MCF 10A (cell line): ENCODE measurements at regions of chr15 and their contacts with region 1.

Region 1: DNA sequence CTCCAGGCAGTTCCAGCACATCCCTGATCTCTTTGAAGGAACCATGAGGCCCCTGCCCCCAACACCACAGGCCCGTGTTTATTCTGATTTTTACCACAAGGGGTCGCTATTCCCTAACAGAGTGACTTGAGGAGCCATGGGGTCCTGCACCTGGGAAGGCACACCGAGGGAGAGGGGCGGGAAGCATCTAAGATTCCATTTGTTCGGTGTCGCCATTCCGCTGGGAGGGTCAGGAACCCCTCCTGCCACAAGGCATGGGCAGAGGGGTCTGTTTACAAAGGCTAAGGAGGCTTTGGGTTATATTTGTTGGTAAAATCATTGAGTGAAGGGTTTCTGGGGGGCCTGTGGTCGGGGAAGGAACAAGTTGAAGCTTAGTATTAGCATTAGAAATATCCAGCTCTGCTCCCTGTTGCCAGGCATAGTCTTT is 77.1 kb downstream of the WDR76 start:
- DNase-seq: peak; percentile 77
- H3K4me3 Mint-ChIP-seq: peak overlapping the region; percentile 4
- H3K27ac Mint-ChIP-seq: no peak overlapping the region
- H3K4me1 Mint-ChIP-seq: peaks cover 5% of the 10 kb centered on the region
- H3K27me3 Mint-ChIP-seq: no peaks in the 10 kb centered on the region
- CTCF ChIP-seq: peak; percentile 88

Region 2: GRCh38 chr15:43886558-43886957 is 17.3 kb before region 1 on chr15:
- CTCF ChIA-PET with region 1: interaction called, 13 read pairs
- POLR2A ChIA-PET with region 1: no interaction called
- intact Hi-C with region 1: no loop called
- DNase-seq: no peak
- H3K4me3 Mint-ChIP-seq: no peak overlapping the region
- H3K27ac Mint-ChIP-seq: no peak overlapping the region
- H3K4me1 Mint-ChIP-seq: no peaks in the 10 kb centered on the region
- H3K27me3 Mint-ChIP-seq: no peaks in the 10 kb centered on the region
- CTCF ChIP-seq: no peak

Region 3: GRCh38 chr15:43932907-43933306 is 29.0 kb after region 1 on chr15:
- CTCF ChIA-PET with region 1: interaction called, 30 read pairs
- POLR2A ChIA-PET with region 1: no interaction called
- intact Hi-C with region 1: loop called (anchors 5 kb)
- DNase-seq: no peak
- H3K4me3 Mint-ChIP-seq: no peak overlapping the region
- H3K27ac Mint-ChIP-seq: no peak overlapping the region
- H3K4me1 Mint-ChIP-seq: no peaks in the 10 kb centered on the region
- H3K27me3 Mint-ChIP-seq: no peaks in the 10 kb centered on the region
- CTCF ChIP-seq: no peak

Region 4: DNA sequence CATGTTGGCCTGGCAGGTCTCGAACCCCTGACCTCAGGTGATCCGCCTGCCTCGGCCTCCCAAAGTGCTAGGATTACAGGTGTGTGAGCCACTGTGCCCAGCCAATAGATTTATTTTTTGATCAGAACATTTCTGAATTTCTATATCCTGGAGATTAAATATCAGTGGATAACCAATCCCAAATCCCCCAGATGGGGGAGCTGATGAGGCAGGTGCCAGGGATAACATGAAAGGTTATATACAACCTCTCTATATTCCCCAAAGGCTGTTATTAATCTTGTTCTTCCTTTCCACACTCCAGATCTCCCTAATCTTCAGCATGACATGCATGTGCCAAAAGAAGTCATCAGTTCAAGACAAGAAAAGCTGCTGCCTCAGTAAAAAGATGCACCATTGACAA is 35.2 kb after region 1 on chr15:
- CTCF ChIA-PET with region 1: interaction called, 18 read pairs
- POLR2A ChIA-PET with region 1: no interaction called
- intact Hi-C with region 1: loop called (anchors 5 kb)
- DNase-seq: peak; percentile 47
- H3K4me3 Mint-ChIP-seq: no peak overlapping the region
- H3K27ac Mint-ChIP-seq: no peak overlapping the region
- H3K4me1 Mint-ChIP-seq: no peaks in the 10 kb centered on the region
- H3K27me3 Mint-ChIP-seq: no peaks in the 10 kb centered on the region
- CTCF ChIP-seq: peak; percentile 68

Region 5: GRCh38 chr15:44066316-44066740 is 162.5 kb after region 1 on chr15:
- CTCF ChIA-PET with region 1: interaction called, 82 read pairs
- POLR2A ChIA-PET with region 1: interaction called, 6 read pairs
- intact Hi-C with region 1: loop called (anchors 1 kb)
- DNase-seq: peak; percentile 93
- H3K4me3 Mint-ChIP-seq: no peak overlapping the region
- H3K27ac Mint-ChIP-seq: no peak overlapping the region
- H3K4me1 Mint-ChIP-seq: peaks cover 6% of the 10 kb centered on the region
- H3K27me3 Mint-ChIP-seq: no peaks in the 10 kb centered on the region
- CTCF ChIP-seq: peak; percentile 65

Region 6: DNA sequence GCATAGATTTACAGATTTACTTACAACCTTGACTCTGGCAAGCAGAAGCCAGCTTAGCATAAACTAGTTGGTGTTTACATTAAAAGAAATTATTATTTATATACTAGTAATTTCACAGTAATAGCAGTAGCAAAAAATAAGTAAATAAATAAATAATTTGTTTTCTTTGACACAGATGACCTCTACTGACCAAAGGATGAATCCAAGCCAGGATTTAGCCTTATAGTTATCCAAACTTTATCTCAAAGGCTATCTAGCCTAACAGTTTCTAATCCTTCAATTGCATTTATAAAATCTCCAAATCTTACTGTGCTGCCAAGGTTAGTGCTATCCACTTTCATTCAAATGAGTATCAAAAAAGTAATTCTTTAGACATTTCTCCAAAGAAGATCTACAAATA is 226.9 kb after region 1 on chr15:
- CTCF ChIA-PET with region 1: interaction called, 12 read pairs
- POLR2A ChIA-PET with region 1: interaction called, 4 read pairs
- intact Hi-C with region 1: loop called (anchors 1 kb)
- DNase-seq: peak; percentile 8
- H3K4me3 Mint-ChIP-seq: no peak overlapping the region
- H3K27ac Mint-ChIP-seq: no peak overlapping the region
- H3K4me1 Mint-ChIP-seq: no peaks in the 10 kb centered on the region
- H3K27me3 Mint-ChIP-seq: no peaks in the 10 kb centered on the region
- CTCF ChIP-seq: peak; percentile 58

Region 7: DNA sequence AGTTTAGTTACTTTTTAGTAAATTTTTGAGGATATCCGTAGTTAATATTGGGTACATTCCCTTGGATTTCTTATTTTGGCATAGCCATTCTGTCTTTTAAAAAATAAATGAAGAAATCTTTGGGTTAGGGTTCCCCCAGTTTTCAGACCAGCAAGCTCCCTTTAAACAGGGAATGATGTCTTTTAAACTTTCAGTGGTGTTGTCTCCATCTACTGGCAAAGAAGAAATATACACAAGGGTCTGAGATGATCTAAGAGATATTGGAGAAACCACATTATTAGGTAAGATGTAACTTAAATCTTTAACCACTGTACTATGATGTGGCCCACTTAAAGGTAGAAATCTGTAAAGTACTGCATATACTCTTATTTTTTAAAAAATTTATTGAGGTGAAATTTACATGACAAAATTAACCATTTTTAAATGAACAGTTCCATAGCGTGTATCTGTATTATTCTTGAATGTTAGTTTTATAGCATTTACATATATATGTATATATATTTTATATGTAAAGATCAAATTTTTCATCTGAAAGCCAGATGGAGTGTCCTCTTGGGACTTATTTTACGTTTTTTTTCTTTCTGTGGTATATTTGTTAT is 598.0 kb after region 1 on chr15:
- CTCF ChIA-PET with region 1: interaction called, 11 read pairs
- POLR2A ChIA-PET with region 1: no interaction called
- intact Hi-C with region 1: loop called (anchors 5 kb)
- DNase-seq: peak; percentile 49
- H3K4me3 Mint-ChIP-seq: no peak overlapping the region
- H3K27ac Mint-ChIP-seq: no peak overlapping the region
- H3K4me1 Mint-ChIP-seq: no peaks in the 10 kb centered on the region
- H3K27me3 Mint-ChIP-seq: no peaks in the 10 kb centered on the region
- CTCF ChIP-seq: peak; percentile 58